Head of caudate nucleus (tissue), 42 donors: ENCODE measurements at regions of chr4 and their contacts with region 1.

Region 1: DNA sequence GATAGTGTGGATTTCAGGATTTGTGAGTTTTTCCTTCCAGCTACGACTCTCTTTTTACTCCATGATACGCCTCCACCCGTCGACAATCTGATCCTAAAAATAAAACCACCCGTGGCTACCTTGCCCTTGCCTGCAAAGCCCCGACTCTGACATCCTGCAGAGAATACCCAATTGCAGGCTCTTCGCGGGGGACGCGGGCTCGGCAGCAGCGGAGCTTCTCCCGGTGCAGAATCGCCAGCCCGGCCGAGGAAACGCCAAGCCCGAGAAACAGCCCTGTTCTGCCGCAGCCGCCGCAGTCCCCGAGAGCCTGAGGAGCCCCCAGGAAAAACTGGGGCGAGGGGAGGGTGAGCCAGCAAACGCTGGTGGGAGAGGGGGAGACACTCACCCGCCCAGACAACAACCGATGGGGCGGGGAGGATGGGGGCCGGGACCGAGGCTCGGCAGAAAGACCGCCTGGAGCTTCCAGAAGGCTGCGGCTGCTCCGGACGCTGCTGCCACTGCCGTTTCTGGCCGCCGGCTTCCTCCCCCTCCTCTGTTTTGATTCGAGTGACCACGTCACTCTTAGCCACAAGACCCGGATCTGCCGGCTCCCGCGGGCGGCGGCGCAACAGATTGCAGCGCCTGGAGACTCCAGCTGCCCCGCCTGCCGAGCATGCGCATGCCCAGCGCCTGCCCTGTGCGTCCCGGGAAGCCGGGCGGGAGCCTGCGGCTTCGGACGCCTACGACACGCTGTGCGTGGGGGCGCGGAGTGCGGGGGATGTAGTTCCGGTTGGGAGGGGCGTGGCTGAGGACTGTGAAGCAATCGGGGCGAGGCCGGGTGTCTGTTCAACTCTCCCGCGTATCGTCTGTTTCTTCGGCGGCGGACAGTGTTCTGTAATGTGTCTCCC is at the start of gene SMIM14:
- DNase-seq: peak; percentile 95 to 99 (median 98)

Region 2: DNA sequence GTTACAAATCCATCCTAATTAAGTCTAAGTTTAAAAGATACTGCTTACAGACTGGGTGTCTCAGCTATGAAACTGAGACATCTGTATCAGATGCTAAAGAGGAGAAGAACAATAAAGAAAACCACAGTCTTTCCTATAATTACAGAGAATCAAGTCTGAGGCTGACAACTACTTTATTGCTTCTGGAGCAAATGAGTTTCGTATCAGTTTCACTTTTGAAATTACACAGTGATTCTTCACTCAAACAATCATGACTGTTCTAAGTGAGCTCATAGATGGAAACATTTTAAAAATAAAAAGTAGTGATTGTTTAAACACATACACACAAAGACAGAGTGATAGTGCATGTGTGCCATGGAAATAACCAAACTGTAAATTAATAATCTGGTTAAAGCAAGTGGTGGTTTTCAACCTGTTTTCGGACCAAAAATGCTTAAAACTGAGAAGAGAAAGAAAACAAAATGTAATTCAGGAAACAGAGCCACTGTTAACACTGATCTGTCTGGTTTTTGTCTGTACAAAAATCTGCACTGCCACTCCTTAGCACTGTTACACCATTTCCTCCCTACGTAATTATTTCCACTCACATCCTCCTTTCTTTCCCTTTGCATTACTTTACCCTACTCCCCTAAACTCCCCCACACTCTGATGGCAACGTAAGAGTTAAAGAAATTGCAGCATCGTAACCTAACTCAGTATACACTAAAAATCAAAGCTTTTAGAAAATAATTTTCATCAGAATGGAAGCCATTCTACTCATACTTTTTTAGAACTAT is 284.9 kb before region 1 on chr4:
- intact Hi-C with region 1: loop called (anchors 10 kb)
- DNase-seq: no peak

Region 3: DNA sequence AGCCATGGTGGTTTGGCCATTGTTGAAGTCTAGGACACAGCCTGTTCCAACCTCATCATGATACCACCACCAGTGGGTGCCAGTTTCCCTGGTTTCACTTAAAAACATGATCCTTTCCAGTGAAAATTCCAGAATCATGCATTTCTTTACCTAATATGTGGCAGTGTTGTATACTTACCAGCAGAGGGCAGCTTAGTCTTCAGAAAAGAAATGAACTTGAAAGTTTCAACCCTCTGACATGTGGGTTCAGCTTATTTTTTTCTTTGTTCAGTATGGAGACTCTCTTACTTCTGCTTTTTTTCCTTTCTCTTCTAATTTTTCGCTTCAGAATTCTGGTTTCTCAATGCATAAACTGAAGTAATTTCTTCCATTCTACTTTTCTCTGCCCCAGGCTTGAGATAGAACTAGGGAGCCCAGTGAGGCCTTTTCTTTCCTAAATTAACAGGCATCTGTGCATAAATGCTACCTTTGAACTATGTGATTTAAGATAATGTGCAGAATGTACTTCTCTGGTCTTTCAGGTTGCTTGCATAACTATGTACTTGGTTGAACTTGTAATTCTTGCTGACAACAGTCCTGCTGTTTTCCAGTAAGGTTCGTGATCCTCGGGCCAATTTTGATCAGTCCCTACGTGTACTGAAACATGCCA is 169.0 kb before region 1 on chr4:
- intact Hi-C with region 1: loop called (anchors 5 kb)
- DNase-seq: peak in 18 of 42 donors; percentile 12 to 64 (median 40)

Region 4: GRCh38 chr4:39527273-39528060 is 111.1 kb before region 1 on chr4 and contains the start of gene UGDH:
- intact Hi-C with region 1: loop called (anchors 2 kb)
- DNase-seq: peak; percentile 88 to 99 (median 97)

Region 5: DNA sequence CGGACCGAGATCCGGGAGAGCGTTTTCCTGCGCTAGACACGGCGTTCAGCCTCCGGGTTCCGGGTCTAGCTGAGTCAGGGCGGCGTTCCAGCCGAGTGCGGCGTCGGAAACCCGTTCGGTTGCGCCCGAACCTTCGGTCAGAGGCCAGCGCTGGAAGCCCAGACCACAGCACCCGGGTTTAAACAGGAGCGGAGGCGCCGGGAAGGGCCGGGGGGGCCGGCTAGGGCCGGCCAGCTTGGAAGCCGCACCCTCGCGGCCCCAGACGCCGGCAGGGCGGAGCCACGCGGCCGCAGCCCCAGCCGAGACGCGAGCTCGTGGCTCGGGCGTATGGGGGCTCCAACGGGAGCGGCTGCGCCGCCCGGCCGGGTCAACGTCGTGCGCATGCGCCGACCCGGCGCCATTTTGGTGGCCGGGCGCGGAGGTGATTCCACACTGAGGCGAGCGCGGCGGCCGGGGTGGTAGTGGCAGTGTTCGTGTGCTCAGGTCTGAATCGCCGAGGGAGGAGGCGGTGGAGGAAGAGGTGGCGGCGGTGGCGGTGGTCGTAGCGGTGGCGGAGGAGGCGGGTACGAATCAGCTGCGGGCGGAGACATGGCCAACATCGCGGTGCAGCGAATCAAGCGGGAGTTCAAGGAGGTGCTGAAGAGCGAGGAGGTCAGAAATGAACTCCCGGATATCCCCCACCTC is 59.3 kb after region 1 on chr4 and contains the start of gene UBE2K:
- intact Hi-C with region 1: loop called (anchors 2 kb)
- DNase-seq: peak; percentile 42 to 94 (median 86)

Region 6: DNA sequence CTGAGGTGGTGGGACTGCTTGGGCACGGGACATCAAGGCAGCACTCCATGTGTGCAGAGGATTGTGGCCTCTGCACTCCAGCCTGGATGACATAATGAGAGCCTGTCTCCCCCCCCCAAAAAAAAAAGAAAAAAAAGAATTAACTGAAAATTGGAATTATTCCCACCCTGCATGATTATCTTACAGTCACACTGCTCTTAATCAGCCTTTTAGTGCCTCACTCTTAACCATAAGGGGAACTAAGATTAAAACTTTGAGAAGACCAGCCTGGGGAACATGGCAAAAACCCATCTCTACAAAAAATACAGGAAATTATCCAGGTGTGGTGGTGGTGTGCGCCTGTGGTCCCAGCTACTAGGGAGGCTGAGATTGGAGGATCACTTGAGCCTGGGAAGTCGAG is 153.9 kb after region 1 on chr4:
- intact Hi-C with region 1: no loop called
- DNase-seq: no peak

Region 7: DNA sequence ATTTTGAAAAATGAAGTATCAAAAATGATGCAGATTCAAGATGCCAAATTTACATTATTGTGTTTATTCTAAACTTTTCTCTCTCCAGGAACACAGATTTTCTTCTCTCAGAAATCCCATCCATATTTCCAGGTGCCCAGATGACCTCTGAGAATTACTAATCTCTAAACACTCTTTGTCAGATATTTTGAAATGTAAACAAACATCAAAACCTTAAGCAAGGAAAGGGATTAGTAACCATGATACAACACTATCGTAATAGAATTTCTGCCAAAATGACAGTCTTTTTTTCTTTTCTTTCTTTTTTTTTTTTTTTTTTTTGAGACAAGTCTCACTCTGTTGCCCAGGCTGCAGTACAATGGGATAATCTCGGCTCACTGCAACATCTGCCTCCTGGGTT is 262.4 kb after region 1 on chr4:
- intact Hi-C with region 1: no loop called
- DNase-seq: no peak

Region 8: DNA sequence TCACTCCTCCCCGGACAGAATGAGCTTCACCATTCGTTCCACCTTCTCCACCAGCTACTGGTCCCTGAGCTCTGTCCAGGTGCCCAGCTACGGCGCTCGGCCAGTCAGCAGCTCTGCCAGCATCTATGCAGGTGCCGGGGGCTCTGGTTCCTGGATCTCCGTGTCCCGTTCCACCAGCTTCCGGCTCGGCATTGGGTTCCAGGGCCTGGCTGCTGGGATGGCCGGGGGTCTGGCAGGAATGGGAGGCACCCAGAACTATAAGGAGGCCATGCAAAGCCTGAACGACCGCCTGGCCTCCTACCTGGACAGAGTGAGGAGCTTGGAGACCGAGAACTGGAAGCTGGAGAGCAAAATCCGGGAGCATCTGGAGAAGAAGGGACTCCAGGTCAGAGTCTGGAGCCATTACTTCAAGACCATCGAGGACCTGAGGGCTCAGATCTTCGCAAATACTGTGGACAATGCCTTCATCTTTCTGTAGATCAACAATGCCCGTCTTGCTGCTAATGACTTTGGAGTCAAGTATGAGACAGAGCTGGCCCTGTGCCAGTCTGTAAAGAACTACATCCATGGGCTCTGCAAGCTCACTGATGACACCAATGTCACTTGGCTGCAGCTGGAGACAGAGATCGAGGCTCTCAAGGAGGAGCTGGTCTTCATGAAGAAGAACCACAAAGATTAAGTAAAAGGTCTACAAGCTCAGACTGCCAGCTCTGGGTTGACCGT is 381.8 kb after region 1 on chr4:
- intact Hi-C with region 1: no loop called
- DNase-seq: no peak